GM10248 (cell line): ENCODE measurements at regions of chr11 and their contacts with region 1.

Region 1: DNA sequence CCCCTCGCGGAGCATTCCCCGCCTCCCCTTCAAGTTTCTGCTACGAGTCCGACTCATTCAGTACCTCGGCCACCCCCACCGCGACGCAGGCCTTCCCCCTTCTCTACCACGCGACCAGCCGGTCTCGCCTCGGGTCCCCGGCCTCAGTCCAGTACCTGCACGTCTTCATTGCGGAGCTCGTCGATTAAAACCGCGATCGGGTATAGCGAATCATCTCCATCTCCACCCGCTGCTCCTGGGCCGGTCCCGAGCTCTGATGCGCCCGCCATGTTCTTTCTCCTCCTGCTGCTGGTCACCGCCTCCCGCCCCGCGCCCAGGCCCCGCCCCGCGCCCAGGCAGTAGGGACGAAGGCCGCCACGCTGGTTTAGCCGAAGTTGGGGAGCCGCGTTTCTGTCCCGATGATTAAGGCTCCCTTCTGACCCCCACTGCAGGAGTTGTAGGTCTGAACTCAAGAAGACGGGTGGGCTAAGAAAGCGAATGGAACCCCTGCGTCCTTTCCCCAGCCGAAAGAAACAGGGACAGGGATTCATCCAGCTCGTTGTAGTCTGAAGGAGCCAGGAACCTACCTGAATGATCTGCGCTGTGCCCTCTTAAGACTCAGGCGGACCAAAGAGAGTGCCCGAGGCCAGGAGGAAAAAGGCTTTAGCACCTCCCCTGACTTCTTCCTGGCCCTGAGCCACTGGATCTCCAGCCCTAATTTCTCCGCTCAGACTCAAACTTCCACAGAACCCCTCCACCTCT is at the start of gene PPP2R1B:
- DNase-seq: peak; percentile 97
- CTCF ChIP-seq: no peak

Region 2: DNA sequence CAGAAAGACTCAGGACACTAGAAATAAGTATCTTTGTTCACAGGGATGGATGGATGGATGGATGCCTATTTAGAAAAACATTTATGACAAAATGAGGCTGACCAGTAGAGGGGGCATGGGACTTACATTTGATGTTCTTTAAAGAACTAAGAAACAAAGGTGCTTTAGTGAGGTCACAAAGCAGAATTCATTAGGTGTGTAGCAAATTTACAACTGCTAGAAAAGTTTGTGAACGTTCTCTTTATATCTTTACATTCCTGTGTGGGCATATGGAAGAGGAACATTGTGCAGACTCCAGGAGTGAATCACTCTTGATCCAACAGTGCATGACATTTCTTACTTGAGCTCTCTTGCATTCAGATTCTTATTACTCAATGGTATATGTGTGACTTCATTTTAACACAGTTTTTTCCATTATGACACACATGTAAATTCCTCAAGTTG is 179.9 kb before region 1 on chr11:
- CTCF ChIA-PET with region 1: interaction called, 10 read pairs
- POLR2A ChIA-PET with region 1: no interaction called
- DNase-seq: peak; percentile 43
- CTCF ChIP-seq: peak; percentile 53

Region 3: DNA sequence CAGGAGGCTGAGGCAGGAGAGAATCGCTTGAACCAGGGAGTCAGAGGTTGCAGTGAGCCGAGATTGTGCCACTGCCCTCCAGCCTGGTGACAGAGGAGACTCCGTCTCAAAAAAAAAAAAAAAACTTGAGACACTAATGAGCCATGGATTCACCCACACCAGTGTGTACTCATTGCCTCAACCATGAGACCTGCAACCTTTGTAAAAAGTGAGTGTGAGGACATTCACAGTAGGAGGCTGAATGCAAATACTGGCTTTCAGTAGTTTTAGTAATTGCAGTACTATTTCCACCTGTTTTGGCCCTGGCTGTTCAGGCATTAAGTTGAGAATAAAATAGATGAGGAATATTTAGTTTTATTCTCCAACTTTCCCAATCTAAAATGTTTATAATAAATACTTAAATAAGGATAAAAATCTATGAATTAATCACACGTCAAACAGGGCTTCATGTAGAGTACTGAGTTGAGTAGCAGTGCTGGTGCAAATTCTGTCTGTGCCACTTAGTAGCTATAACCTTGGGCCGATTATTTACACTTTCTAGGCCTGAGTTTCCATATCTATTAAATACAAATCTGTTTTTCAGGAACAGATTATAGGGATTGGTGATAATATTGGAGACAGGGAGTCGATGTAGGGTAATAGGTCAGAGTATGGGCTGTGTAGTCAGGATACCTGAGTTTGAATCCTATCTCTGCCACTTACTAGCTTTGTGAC is 72.9 kb before region 1 on chr11:
- CTCF ChIA-PET with region 1: no interaction called
- POLR2A ChIA-PET with region 1: no interaction called
- DNase-seq: no peak
- CTCF ChIP-seq: no peak

Region 4: GRCh38 chr11:111748035-111748804 is 18.0 kb before region 1 on chr11:
- CTCF ChIA-PET with region 1: interaction called, 11 read pairs
- POLR2A ChIA-PET with region 1: no interaction called
- DNase-seq: no peak
- CTCF ChIP-seq: no peak